Vagina (tissue), 2 donors: ENCODE measurements at regions of chr5 and their contacts with region 1.

Region 1: GRCh38 chr5:14142827-14143548 is at the start of gene TRIO:
- DNase-seq: peak in 1 of 2 donors; percentile 95
- H3K4me3 ChIP-seq: peak within 1 kb of the TSS; percentile 79 to 84
- H3K27ac ChIP-seq: peak within 1 kb of the TSS; percentile 96
- H3K4me1 ChIP-seq: peaks cover 27% of the 10 kb centered on the region
- H3K27me3 ChIP-seq: no peaks in the 10 kb centered on the region
- CTCF ChIP-seq: peak in 2 of 3 experiments; percentile 24 to 38
- POLR2A ChIP-seq: peak in 1 of 2 donors; percentile 49
- total RNA-seq, gene TRIO: 142 TPM

Region 2: DNA sequence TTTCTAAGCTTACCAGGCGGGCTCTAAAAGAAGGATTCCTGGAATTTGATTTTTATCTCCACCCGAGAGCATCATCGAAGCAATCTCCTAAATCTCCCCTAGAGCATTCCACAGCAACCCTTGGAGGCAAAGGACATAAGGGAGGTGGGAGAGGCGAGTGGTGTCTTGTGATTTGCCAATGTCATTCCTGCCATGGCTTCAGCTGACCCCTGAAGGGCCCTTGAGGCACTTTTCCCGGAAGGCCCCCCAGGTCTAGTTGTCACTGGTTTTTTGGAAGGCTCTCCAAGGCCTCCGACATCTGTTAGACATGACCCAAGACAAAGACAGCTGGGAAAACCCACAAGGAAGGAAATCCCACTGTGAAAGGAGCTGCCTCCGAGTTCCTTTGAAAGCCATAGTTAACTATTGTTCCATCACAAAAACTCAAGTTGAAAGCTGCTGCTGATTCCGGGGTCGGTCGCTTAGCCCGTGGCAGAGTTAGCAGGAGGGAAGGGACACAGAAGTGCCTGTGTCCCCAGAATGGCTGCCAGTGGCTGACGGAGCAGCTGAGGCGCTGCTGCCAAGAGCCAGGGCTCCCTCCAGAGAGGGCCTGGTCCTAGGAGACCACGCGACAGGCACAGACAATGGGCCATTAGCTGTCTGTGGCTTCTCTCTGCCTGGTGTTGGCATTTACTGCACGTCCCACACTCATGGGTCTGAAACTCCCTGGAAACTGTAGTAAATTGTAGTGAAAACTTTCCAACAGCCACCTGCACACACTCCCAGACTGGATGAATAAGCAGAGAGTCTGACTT is 24.3 kb before region 1 on chr5:
- intact Hi-C with region 1: no loop called
- DNase-seq: peak in 1 of 2 donors; percentile 75
- H3K4me3 ChIP-seq: no peak overlapping the region
- H3K27ac ChIP-seq: no peak overlapping the region
- H3K4me1 ChIP-seq: no peaks in the 10 kb centered on the region
- H3K27me3 ChIP-seq: no peaks in the 10 kb centered on the region
- CTCF ChIP-seq: no peak
- POLR2A ChIP-seq: no peak

Region 3: DNA sequence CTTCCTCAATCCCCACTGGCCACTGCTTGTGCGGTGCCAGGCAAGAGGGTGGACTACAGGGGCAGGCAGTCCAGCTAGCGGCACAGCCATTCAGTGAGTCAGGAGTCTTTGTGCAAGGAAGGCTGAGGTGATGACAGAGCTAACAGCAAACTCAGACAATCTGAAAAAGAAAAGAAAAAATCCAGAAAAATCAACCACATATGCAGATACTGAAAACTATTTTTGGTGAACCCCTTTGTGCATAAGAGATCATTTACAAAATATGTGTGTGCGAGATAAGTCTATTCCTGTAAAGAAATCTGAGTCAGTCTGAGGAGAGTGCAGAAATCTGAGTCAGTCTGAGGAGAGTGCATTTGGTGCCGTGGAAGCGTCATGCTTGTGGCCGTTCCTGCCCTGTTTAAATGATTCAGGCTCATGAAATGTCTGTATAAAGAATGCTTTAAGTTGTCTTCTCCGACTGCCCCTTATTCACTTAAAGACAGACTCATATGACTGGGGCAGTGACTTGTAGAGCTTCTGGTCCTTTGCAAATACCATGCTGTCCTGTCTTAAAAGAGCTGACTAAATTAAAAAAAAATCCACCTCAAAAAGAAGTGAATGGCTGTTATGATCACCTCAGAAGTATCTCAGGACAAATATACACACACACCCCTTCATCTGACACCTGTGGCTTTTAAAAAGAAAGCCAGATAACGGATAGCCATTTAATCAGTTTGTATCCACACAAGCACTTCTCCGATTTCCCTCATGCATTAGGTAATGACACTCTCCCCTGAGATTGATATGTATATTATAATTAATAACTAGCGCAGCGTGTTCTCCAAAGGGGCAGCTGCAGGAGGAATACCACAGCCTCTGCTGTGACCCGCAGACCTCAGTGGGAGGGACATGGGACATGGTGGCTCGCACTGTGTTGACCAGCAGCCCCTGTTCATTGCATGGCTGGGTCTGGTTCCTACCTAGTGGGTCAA is 47.5 kb after region 1 on chr5:
- intact Hi-C with region 1: loop called (anchors 10 kb)
- DNase-seq: no peak
- H3K4me3 ChIP-seq: no peak overlapping the region
- H3K27ac ChIP-seq: peak overlapping the region; percentile 45
- H3K4me1 ChIP-seq: peaks cover 54% of the 10 kb centered on the region
- H3K27me3 ChIP-seq: no peaks in the 10 kb centered on the region
- CTCF ChIP-seq: no peak
- POLR2A ChIP-seq: no peak

Region 4: DNA sequence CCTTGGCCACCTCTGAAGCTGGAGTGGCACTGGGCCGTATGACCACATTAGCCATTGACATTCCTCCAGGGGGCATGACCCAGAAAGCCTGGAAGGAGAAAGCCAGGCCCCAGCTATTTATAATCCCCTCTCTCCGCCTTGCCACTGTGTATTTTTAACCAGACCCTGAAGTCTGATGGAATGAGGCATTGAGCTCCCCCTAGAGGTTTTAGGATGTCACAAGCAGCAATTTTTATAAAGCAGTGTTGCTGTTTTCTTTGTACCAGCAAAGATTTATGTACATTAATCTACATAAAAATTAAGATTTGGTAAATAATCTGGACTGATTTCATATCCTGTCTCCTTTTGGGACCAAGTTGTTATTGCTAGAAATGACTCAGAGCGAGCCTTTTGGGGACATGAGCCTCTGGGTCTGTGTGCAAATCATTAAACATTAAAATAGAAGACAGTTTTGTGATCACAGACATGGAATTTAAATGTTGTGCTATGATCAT is 127.3 kb after region 1 on chr5:
- intact Hi-C with region 1: loop called (anchors 5 kb)
- DNase-seq: peak in 1 of 2 donors; percentile 67
- H3K4me3 ChIP-seq: no peak overlapping the region
- H3K27ac ChIP-seq: peak overlapping the region; percentile 51
- H3K4me1 ChIP-seq: peaks cover 45% of the 10 kb centered on the region
- H3K27me3 ChIP-seq: no peaks in the 10 kb centered on the region
- CTCF ChIP-seq: peak; percentile 14 to 73 (median 68)
- POLR2A ChIP-seq: no peak